Dendritic cell treated with granulocyte-macrophage colony-stimulating factor and Interleukin-4, amounts not matched to agents 40 ng/mL and 50 ng/mL, for 4 days (primary cell): ENCODE measurements at regions of chr10 and their contacts with region 1.

Region 1: GRCh38 chr10:17805921-17806577 is 3.1 kb upstream of the MRC1 start:
- H3K4me3 Mint-ChIP-seq: peak overlapping the region; percentile 23
- H3K27ac Mint-ChIP-seq: peak overlapping the region; percentile 78
- H3K4me1 Mint-ChIP-seq: peaks cover 46% of the 10 kb centered on the region
- H3K27me3 Mint-ChIP-seq: no peaks in the 10 kb centered on the region

Region 2: DNA sequence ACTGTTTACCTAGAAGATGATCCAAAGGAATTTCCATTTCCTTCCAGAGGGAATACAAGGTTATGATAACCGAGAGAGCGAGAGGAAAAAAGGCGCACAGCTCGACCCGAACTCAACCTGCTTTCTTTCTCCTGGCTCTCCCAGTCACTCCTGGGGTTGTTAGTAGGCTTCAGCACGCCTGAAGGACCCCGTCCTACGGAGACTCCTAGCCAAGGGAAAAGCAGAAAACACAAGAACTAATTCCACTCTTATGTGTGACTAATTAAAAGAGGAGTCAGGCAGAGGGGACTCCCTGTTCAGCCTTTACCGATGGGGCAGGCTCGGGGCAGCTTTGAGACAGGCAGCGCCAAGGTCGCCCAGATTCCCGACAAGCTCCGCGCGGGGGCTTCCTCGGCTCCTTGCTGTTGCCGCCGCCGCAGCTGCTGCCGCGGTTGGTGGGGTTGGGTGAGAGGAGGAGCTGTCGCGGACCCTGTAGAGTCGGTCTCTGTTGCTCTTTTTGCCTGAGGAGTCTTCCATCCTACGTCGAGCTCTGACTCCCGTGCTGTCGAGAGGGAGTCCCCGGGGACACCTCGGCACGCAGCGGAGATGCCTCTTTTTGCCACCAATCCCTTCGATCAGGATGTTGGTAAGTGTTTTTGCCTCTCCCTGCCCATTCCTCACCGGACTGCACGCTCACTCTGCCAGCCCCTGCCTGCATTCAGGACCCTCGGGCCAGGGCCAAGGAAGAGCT is 162.1 kb before region 1 on chr10 and contains the start of gene STAM:
- intact Hi-C with region 1: loop called (anchors 10 kb)
- H3K4me3 Mint-ChIP-seq: peak within 1 kb of the TSS; percentile 99
- H3K27ac Mint-ChIP-seq: peak within 1 kb of the TSS; percentile 99
- H3K4me1 Mint-ChIP-seq: peaks cover 41% of the 10 kb centered on the region
- H3K27me3 Mint-ChIP-seq: no peaks in the 10 kb centered on the region

Region 3: GRCh38 chr10:17742918-17743317 is 63.1 kb before region 1 on chr10:
- intact Hi-C with region 1: loop called (anchors 5 kb)
- H3K4me3 Mint-ChIP-seq: peak overlapping the region; percentile 45
- H3K27ac Mint-ChIP-seq: peak overlapping the region; percentile 82
- H3K4me1 Mint-ChIP-seq: peaks cover 59% of the 10 kb centered on the region
- H3K27me3 Mint-ChIP-seq: no peaks in the 10 kb centered on the region

Region 4: DNA sequence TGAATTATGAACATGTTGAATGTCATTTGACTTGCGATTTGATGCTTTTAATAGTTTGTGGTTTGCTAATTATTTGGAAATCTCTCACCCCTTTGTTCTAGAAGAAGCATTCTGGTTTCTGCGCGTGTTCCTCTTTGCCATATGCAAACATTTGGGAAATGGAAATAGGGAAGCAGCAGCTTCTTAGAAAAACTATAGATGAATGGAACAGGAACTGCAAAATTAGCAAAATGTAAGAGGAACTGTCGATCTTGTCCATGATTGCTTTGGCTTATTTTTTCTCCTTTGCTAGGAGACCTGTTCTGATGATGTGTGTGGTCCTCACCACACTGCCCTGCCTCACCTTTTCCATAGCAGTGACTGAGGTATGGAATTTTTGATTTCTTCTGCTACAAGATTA is 35.0 kb before region 1 on chr10:
- intact Hi-C with region 1: loop called (anchors 5 kb)
- H3K4me3 Mint-ChIP-seq: peak overlapping the region; percentile 73
- H3K27ac Mint-ChIP-seq: peak overlapping the region; percentile 96
- H3K4me1 Mint-ChIP-seq: peaks cover 58% of the 10 kb centered on the region
- H3K27me3 Mint-ChIP-seq: no peaks in the 10 kb centered on the region

Region 5: GRCh38 chr10:17787078-17787961 is 18.7 kb before region 1 on chr10:
- intact Hi-C with region 1: loop called (anchors 2 kb)
- H3K4me3 Mint-ChIP-seq: peak overlapping the region; percentile 17
- H3K27ac Mint-ChIP-seq: peak overlapping the region; percentile 89
- H3K4me1 Mint-ChIP-seq: peaks cover 74% of the 10 kb centered on the region
- H3K27me3 Mint-ChIP-seq: no peaks in the 10 kb centered on the region

Region 6: GRCh38 chr10:18583575-18584270 is 777.7 kb after region 1 on chr10:
- intact Hi-C with region 1: no loop called
- H3K4me3 Mint-ChIP-seq: no peak overlapping the region
- H3K27ac Mint-ChIP-seq: no peak overlapping the region
- H3K4me1 Mint-ChIP-seq: no peaks in the 10 kb centered on the region
- H3K27me3 Mint-ChIP-seq: no peaks in the 10 kb centered on the region